A673 (cell line): ENCODE measurements at regions of chr3 and their contacts with region 1.

Region 1: DNA sequence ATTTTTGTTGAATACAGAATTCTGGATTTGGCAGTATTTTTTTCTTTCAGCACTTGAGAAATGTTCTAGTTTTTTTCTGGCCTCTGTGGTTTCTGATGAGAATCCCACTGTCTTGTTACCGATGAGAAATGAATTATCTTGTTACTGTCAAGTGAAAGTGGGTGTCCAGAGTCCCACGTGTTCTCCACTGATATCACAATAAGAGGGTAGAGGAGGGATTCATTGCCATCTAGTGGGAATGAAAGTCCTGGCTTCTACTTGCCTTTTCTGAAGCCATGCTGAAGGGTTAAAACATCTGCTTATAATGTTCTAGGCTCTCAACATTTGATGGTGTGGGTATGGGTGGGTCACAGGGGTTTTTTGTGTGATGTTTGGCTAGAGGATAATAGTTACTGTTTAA is 66.1 kb downstream of the SEC22A start:
- DNase-seq: peak; percentile 31
- H3K4me3 ChIP-seq: no peak overlapping the region
- H3K27ac ChIP-seq: no peak overlapping the region
- H3K4me1 ChIP-seq: peaks cover 13% of the 10 kb centered on the region
- H3K27me3 ChIP-seq: no peaks in the 10 kb centered on the region
- CTCF ChIP-seq: peak; percentile 29; the same call in 1 of the 2 replicates

Region 2: DNA sequence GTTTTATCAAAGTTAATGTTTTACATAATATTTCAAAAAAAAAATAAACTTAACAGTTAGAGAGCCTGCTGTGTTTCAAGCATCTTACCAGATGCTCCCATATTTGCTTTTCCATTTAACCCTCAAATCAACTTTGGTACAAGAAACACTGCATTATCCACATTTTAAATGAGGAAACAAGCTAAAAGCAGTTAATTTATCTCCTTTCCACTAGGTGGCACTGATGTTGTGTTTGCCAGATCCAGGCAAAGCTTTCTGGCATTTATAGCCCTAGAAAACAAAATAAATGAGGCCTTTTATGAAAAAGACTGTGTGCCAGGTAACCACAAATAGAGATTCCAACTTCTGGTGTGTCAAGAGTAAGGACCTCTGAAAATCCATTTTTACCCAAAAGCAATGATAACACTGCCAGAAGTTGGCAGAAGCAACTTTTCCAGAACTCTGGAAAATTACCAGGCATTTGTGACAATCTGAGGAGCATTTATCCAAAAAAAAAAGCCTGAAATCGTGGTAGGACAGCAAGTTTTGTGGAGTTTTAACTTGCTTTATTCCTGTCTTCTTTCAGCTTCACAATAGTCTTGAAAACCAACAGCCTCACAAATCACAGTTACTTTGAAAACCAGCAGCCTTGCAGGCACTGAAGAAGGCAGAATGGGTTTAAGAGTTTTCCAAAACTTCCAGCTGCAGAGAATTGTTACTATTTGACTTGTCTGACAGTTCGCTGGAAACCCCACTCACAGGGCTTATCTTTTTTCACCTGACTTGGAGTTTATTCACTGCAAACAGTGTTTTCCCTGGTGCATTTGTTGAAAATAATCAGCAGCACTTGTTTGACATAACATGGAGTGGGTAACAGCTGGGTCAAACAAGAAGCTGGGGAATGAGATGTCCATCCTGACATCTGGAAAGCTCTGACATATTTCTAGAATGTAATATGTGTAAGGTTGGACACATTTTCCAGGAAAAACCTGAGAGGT is 874.7 kb before region 1 on chr3:
- CTCF ChIA-PET with region 1: no interaction called
- POLR2A ChIA-PET with region 1: no interaction called
- intact Hi-C with region 1: loop called (anchors 10 kb)
- DNase-seq: peak; percentile 75
- H3K4me3 ChIP-seq: no peak overlapping the region
- H3K27ac ChIP-seq: peak overlapping the region; percentile 12
- H3K4me1 ChIP-seq: peaks cover 38% of the 10 kb centered on the region
- H3K27me3 ChIP-seq: no peaks in the 10 kb centered on the region
- CTCF ChIP-seq: peak; percentile 79

Region 3: DNA sequence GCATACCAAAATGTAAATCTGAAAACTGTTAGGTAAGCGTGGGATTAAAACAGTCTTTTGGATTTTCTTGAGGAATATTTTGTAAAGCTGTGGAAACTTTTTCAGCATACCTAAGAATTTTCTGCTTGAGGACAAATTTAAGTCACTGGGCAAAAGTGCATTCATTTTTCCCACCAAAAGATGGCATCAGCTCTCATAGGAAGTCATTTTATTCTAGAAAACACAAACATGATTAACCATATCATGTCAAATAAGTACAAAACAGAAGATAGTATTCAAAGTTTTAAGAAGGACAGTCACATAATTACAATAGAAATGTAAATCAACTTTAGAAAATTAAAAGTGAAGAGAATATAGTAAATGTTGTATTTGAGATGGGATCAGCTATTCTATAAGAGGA is 409.4 kb before region 1 on chr3:
- CTCF ChIA-PET with region 1: no interaction called
- POLR2A ChIA-PET with region 1: no interaction called
- intact Hi-C with region 1: loop called (anchors 10 kb)
- DNase-seq: peak; percentile 29
- H3K4me3 ChIP-seq: no peak overlapping the region
- H3K27ac ChIP-seq: no peak overlapping the region
- H3K4me1 ChIP-seq: no peaks in the 10 kb centered on the region
- H3K27me3 ChIP-seq: no peaks in the 10 kb centered on the region
- CTCF ChIP-seq: peak; percentile 60

Region 4: DNA sequence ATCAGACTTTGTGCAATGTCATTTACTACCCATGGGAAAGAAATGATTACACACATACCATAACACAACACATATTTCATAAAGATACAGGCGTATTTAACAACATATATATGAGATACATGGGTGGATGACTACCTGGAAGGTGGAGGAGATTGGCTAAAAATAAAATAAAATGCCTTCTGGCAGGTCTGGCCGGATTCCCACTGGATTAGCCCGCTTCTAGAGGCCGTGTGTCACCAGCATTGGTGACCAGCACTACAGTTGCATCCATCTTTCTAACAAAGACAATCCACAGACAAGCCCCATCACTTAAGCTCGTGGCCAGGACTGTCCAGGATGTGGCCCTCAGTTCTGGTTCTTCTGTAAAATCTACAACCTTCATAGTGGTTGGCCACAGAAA is 87.0 kb before region 1 on chr3:
- CTCF ChIA-PET with region 1: no interaction called
- POLR2A ChIA-PET with region 1: no interaction called
- intact Hi-C with region 1: no loop called
- DNase-seq: no peak
- H3K4me3 ChIP-seq: no peak overlapping the region
- H3K27ac ChIP-seq: no peak overlapping the region
- H3K4me1 ChIP-seq: no peaks in the 10 kb centered on the region
- H3K27me3 ChIP-seq: no peaks in the 10 kb centered on the region
- CTCF ChIP-seq: no peak

Region 5: GRCh38 chr3:123439806-123440580 is 172.2 kb after region 1 on chr3:
- CTCF ChIA-PET with region 1: no interaction called
- POLR2A ChIA-PET with region 1: no interaction called
- intact Hi-C with region 1: no loop called
- DNase-seq: no peak
- H3K4me3 ChIP-seq: no peak overlapping the region
- H3K27ac ChIP-seq: no peak overlapping the region
- H3K4me1 ChIP-seq: no peaks in the 10 kb centered on the region
- H3K27me3 ChIP-seq: peaks cover 10% of the 10 kb centered on the region
- CTCF ChIP-seq: no peak